ENCODE measurements at regions of chr1 and their contacts with region 1.

Region 1: GRCh38 chr1:236489710-236490377 is 33.9 kb upstream of the LGALS8 start:
- DNase-seq: no peak
- ATAC-seq: peak; percentile 80
- H3K4me3 ChIP-seq: no peak overlapping the region
- H3K27ac ChIP-seq: no peak overlapping the region
- H3K4me1 ChIP-seq: no peaks in the 10 kb centered on the region
- H3K27me3 ChIP-seq: no peaks in the 10 kb centered on the region
- CTCF ChIP-seq: peak; percentile 64

Region 2: GRCh38 chr1:236103646-236104218 is 386.1 kb before region 1 on chr1:
- intact Hi-C with region 1: loop called (anchors 10 kb)
- DNase-seq: no peak
- ATAC-seq: peak; percentile 78
- H3K4me3 ChIP-seq: no peak overlapping the region
- H3K27ac ChIP-seq: no peak overlapping the region
- H3K4me1 ChIP-seq: no peaks in the 10 kb centered on the region
- H3K27me3 ChIP-seq: no peaks in the 10 kb centered on the region
- CTCF ChIP-seq: peak; percentile 91